ENCODE measurements at regions of chr1 and their contacts with region 1.

Region 1: DNA sequence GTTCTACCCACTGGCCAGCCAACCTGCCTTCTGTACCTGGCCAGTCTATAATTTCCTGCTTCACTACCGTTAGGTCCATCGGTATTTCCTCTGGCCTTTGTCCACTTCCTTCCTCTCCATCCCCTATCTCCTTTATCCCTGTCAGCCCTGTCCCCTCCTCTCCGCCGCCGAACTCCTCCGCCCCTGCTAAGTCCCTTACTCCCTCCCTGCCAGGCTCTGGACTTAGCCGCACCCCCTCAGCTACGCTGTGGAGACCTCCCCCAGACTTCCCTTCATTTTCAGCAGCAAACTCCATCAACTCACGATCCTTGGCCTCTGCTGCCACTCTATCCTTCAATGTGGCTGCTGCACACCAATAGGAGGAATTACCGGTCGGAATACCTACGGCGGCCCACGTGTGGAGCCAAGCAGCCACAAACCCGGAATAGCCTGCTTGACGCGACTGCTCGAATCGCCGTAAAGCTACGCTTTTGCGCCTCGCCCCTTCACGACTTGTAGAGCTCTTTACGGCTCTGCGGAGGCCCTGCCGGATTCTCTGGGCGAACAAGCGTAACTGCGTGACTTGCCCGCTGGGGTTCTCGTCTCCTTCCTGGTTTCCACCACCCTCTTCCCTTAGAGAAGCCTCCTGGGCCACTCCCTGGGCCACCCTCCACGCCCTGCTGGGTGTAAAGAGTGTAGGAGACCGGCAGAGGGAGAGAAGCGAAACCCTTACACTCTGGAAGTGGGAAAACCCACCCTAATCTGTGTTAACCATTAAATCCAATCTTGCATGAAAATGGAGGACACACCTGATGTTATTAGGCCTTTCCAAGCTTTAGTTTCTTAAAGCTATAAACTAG is at the start of gene ZNHIT6:
- DNase-seq: peak; percentile 96
- H3K4me3 ChIP-seq: peak within 1 kb of the TSS; percentile 87 to 99 (median 88)
- H3K27ac ChIP-seq: peak within 1 kb of the TSS; percentile 53
- H3K4me1 ChIP-seq: peaks cover 12% of the 10 kb centered on the region
- H3K27me3 ChIP-seq: no peaks in the 10 kb centered on the region
- CTCF ChIP-seq: peak in 1 of 2 donors; percentile 42
- total RNA-seq, gene ZNHIT6: 8.5 to 22.5 TPM

Region 2: GRCh38 chr1:85850238-85850637 is 142.0 kb after region 1 on chr1:
- CTCF ChIA-PET with region 1: no interaction called
- dilution Hi-C with region 1: no loop called
- in situ Hi-C with region 1: no loop called
- intact Hi-C with region 1: loop called (anchors 1 kb)
- DNase-seq: peak; percentile 79
- H3K4me3 ChIP-seq: no peak overlapping the region
- H3K27ac ChIP-seq: no peak overlapping the region
- H3K4me1 ChIP-seq: peaks cover 13% of the 10 kb centered on the region
- H3K27me3 ChIP-seq: peaks cover 12% of the 10 kb centered on the region
- CTCF ChIP-seq: peak in 1 of 2 donors; percentile 50

Region 3: DNA sequence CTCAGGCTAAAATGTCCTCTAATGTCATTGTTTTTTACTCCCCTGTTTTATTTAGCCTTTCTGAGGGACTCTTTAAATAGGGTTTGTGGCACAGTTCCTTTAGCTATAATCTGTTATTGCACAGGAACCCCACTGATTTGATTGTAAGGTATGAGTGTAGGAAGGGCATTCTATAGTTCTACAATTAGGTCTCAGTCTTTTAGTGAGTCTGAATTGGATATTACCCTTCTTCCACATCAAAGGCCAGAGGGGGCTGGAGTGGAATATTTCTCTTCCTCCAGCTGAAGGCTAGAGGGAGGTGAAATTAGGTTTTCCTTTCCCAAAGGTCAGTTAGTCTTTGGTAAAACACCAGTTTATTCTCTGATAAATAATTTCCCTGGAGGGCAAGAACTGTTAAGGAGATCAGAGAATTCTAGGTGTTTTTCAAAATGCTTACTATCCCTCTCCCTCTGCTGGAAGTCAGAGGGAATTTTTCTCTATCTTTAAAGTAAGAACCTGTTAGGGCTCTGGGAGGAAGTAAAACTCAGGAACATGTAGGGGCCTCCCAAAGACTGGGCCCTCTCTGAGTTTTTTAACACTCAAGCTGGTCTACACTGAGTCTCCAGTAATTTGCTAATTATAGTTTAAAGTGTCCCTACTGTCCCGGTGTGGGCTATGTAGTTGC is 176.3 kb after region 1 on chr1:
- CTCF ChIA-PET with region 1: no interaction called
- dilution Hi-C with region 1: no loop called
- in situ Hi-C with region 1: no loop called
- intact Hi-C with region 1: loop called (anchors 1 kb)
- DNase-seq: no peak
- H3K4me3 ChIP-seq: no peak overlapping the region
- H3K27ac ChIP-seq: no peak overlapping the region
- H3K4me1 ChIP-seq: no peaks in the 10 kb centered on the region
- H3K27me3 ChIP-seq: no peaks in the 10 kb centered on the region
- CTCF ChIP-seq: peak; percentile 39 to 63

Region 4: DNA sequence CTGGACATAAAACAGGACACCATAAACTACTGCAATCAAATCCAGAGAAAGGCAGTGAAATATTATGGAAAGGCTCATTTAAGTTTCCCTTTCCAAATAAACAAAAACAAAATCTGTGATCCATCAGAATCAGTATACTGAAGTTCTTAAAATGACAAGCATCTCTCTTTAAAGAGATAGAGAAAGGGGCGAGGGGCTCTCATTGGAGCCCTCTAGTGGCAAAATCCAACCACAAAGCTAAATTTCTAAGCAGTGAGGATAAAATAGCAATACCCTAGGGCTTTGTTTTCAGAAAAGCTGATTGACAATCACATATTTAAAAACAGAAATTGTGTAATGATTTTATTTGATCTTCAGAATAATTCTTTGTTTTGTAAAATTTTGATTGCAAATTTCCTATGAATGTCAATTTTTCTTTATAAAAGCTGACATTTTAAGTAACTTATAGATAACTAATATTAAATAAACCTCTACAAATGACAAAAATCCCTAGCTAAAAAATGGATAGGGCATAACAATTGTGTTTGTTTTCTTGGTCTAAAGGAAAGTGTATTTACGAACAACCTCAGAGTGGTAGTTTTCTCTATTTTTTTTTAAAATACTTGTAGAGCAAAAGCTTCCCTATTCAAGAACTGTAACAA is 310.2 kb after region 1 on chr1:
- CTCF ChIA-PET with region 1: no interaction called
- dilution Hi-C with region 1: no loop called
- in situ Hi-C with region 1: no loop called
- intact Hi-C with region 1: loop called (anchors 10 kb)
- DNase-seq: peak; percentile 20
- H3K4me3 ChIP-seq: no peak overlapping the region
- H3K27ac ChIP-seq: no peak overlapping the region
- H3K4me1 ChIP-seq: no peaks in the 10 kb centered on the region
- H3K27me3 ChIP-seq: no peaks in the 10 kb centered on the region
- CTCF ChIP-seq: peak; percentile 60 to 73

Measured in mammary epithelial cell (primary cell).